ENCODE measurements at regions of chr11 and their contacts with region 1.

Region 1: GRCh38 chr11:69048718-69049489 is at the start of gene TPCN2:
- DNase-seq: peak; percentile 92
- H3K4me3 ChIP-seq: peak within 1 kb of the TSS; percentile 81
- H3K27ac ChIP-seq: no peak within 1 kb of the TSS
- H3K27me3 ChIP-seq: no peaks in the 10 kb centered on the region
- CTCF ChIP-seq: no peak
- polyA plus RNA-seq, gene TPCN2: 6.4 and 7.4 TPM in 2 replicates

Region 2: DNA sequence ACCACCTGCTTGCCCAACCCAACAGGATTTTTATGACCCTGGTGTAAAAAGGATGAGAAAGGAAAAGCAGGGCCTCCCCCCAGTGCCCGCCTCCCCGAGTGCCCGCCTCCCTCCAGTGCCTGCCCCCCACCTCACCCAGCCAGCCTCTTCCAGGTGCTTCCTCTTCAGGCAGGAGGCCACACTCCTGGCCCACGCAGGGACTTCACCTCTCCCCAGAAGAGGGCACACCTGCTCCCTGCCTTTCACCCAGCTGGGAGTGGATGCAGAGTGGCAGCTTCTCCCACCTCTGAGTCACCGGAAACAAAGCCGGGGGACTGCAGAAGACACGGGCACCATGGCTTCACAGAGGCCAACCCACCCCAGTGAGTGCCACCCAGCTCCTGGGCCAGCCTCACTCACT is 223.3 kb before region 1 on chr11:
- CTCF ChIA-PET with region 1: no interaction called
- POLR2A ChIA-PET with region 1: no interaction called
- DNase-seq: no peak
- H3K4me3 ChIP-seq: no peak overlapping the region
- H3K27ac ChIP-seq: no peak overlapping the region
- H3K27me3 ChIP-seq: no peaks in the 10 kb centered on the region
- CTCF ChIP-seq: no peak

Region 3: DNA sequence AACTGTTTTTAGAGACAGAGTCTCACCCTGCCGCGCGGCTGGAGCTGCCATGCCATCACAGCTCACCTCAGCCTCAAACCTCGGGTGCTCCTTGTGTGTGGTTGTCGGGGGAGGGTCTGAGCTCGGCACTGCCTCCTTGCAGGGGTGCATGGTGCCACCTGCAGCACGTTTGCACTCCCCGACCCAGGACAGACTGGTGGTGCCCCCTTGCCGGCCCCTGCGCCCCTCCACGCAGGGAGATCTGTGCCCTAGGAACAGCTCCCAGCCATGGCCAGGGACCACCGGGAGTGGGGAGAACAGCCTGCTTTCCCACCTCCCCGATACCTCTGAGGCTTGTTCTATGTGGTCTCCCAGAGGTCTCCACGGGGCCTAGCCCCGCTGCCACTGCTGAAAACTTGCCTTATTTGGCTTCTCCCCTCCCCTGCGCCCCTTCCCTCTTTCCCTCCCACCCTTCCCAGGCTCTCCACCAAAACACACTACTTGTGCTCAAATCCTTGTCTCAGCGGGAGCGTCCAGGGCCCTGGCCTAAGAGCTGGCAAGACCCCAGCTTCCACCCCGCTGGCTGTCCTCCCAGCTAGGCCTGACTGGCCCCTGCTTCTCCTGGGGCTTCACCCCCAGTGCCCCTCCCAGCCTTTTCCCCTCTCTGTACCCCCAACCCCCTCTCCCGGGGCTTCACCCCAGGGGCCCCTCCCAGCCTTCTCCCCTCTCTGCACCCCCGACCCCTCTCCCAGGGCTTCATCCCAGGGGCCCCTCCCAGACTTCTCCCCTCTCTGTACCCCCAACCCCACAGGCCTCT is 13.6 kb before region 1 on chr11:
- CTCF ChIA-PET with region 1: interaction called, 12 read pairs
- POLR2A ChIA-PET with region 1: interaction called, 6 read pairs
- DNase-seq: no peak
- H3K4me3 ChIP-seq: no peak overlapping the region
- H3K27ac ChIP-seq: no peak overlapping the region
- H3K27me3 ChIP-seq: peaks cover 4% of the 10 kb centered on the region
- CTCF ChIP-seq: no peak

Measured in AG04450 (cell line).